Heart left ventricle (tissue), 16 donors: ENCODE measurements at regions of chr12 and their contacts with region 1.

Region 1: GRCh38 chr12:70733385-70733784 is 96.2 kb upstream of the PTPRB start:
- DNase-seq: peak in 1 of 5 donors; percentile 14
- ATAC-seq: peak in 3 of 4 donors; percentile 50 to 72 (median 70)
- H3K4me3 ChIP-seq: no peak overlapping the region
- H3K27ac ChIP-seq: no peak overlapping the region
- H3K4me1 ChIP-seq: no peaks in the 10 kb centered on the region
- H3K27me3 ChIP-seq: peaks cover 0 to 2% (median 0%) of the 10 kb centered on the region in 9 donors
- CTCF ChIP-seq: peak; percentile 55 to 79 (median 66)
- POLR2A ChIP-seq: no peak

Region 2: DNA sequence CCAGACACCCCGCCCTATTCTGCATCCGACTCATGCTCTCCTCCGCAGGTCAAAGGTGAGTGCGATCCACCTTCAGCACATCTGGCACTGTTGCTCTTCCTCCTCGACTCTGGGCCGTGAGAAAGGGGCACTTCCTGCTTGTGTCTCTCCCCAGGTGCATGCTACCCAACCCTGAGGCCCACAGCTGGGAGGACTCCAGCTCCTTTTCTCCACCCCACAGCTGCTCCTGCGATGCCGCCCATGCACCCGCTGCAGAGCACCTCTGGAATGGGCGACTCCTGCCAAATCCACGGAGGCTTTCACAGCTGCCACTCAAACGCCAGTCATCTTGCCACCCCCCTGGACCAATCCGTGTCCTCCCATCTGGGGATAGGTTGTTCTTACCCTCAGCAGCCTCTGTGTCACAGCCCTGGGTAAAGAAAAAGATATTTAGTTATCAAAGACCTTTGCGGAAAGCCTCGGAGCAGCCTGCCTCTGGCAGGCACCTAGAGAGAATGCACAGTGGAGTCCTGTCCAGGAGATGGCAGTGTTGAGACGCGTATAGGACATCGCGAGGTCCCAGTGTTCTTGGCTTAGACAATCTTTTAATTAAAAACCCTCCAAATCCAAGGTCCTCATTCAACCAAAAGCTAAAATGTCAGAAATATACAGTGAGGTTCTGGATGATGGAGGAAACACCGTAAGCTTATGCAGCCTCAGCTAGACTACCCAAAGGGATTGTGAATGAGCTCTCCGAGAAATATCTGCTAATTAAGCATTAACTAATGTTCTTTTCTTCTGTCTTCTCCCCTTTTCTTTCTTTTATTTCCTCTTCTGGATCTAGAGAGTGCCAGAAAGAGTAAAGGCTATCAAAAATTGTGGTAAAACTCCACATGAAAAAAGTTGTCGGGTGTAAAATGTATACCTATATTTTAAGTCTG is 854.1 kb before region 1 on chr12:
- intact Hi-C with region 1: loop called (anchors 2 to 10 kb)
- DNase-seq: peak in 4 of 5 donors; percentile 61 to 76 (median 68)
- ATAC-seq: peak; percentile 58 to 95 (median 94)
- H3K4me3 ChIP-seq: peak overlapping the region in 7 of 12 donors; percentile 19 to 37 (median 26)
- H3K27ac ChIP-seq: no peak overlapping the region
- H3K4me1 ChIP-seq: peaks cover 0 to 9% (median 0%) of the 10 kb centered on the region in 12 donors
- H3K27me3 ChIP-seq: no peaks in the 10 kb centered on the region
- CTCF ChIP-seq: peak; percentile 77 to 94 (median 88)
- POLR2A ChIP-seq: no peak

Region 3: DNA sequence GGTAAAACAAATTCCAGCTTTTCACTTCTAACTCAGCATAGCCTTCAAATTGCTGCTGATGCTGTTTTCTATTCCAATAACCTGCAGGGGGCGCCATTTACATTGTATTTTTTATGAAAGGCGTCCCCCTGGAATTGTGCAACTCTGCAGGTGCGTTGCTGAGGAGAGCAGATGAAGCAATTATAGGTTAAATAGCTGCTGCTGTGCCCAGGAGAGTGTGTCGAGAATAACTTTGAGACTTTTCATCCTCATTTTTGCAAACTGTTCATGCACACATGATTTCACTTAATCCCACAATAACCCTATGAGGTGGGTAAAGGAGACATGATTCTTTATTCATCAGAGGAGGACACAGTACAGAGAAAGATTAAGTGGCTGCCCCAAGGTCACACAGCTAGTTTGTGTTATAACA is 832.7 kb before region 1 on chr12:
- intact Hi-C with region 1: loop called in 6 of 10 experiments (anchors 5 to 10 kb)
- DNase-seq: peak in 4 of 5 donors; percentile 61 to 81 (median 68)
- ATAC-seq: peak in 3 of 4 donors; percentile 49 to 65 (median 58)
- H3K4me3 ChIP-seq: no peak overlapping the region
- H3K27ac ChIP-seq: peak overlapping the region in 2 of 12 donors; percentile 2 to 25
- H3K4me1 ChIP-seq: peaks cover 0 to 32% (median 9%) of the 10 kb centered on the region in 12 donors
- H3K27me3 ChIP-seq: no peaks in the 10 kb centered on the region
- CTCF ChIP-seq: peak; percentile 78 to 93 (median 86)
- POLR2A ChIP-seq: no peak

Region 4: DNA sequence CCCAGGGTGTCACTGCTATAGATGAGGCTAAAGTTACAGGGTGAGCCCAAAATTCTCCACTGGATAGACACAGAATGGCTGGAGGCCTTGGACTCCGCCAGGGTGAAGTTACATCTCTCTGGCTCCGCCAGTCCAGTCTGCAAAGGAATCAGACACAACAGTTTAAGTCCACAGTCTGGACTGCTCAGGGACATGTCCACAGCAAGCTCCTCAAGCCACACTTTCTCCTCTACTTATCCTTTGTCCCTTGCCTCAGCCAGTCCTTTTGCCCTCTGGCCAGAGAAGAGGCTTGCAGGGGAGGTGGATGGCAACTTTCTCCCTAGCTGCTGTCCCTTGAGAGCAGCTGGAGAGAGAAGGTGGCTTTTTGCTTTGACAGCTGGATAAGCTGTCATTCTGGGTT is 124.2 kb before region 1 on chr12:
- intact Hi-C with region 1: no loop called
- DNase-seq: no peak
- ATAC-seq: peak in 1 of 4 donors; percentile 13
- H3K4me3 ChIP-seq: peak overlapping the region; percentile 24 to 73 (median 60)
- H3K27ac ChIP-seq: peak overlapping the region; percentile 68 to 90 (median 78)
- H3K4me1 ChIP-seq: peaks cover 0 to 35% (median 9%) of the 10 kb centered on the region in 12 donors
- H3K27me3 ChIP-seq: peaks cover 0 to 21% (median 0%) of the 10 kb centered on the region in 9 donors
- CTCF ChIP-seq: no peak
- POLR2A ChIP-seq: no peak

Region 5: DNA sequence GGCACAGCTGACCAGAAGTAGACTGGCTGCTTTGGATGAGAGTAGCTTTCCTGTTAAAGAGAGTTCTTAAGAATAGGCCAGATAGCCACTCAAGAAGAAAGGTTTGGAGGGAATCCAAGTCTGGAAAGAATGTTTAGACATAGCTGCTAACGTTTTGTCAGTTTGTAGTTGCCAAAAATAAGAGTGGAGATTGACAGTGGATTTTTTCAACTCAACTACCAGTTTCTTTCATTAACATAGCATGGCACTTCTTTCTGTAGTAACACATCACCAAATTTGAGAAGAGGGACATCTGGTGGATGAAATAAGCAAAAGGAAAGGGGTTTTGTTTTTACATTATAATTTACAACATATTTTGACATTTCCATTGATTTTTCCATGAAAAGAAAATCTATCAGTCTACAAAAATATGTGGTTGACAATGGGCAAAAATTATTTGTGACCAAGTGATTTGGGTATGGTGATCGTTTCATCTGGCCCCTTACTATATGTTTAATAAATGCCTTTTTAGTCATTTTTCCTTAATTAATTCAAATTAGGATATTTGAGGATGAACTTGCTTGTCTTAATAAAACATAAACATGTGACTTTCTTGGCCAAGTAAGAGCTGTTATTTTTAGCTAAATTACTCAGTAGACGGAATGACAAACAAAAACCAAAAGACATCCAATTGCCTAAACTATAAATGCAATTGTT is 116.0 kb after region 1 on chr12:
- intact Hi-C with region 1: loop called in 9 of 10 experiments (anchors 1 to 10 kb)
- DNase-seq: no peak
- ATAC-seq: peak in 1 of 4 donors; percentile 76
- H3K4me3 ChIP-seq: no peak overlapping the region
- H3K27ac ChIP-seq: no peak overlapping the region
- H3K4me1 ChIP-seq: peaks cover 0 to 6% (median 0%) of the 10 kb centered on the region in 12 donors
- H3K27me3 ChIP-seq: no peaks in the 10 kb centered on the region
- CTCF ChIP-seq: peak; percentile 6 to 59 (median 41)
- POLR2A ChIP-seq: no peak

Region 6: DNA sequence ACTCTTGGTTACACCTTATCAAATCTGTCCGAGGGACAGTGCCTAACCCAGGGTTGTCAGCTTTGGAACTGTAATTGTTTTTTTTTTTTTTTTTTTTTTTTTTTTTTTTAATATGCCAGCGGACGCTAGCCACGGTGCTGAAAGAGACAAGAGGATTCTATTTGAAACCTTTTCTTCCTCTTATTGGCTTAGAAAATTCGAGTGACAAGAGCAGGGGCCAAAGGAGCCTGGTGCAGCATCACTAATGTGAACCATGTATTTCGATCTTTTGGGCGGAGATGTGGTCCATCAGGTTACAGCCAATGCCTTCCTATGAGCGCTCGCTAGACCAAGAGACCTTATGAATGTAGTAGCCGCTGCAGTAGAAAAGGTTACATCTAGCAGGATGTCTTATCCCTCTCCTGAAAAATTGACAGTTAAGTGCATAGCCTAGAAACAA is 186.2 kb after region 1 on chr12:
- intact Hi-C with region 1: no loop called
- DNase-seq: no peak
- ATAC-seq: no peak
- H3K4me3 ChIP-seq: no peak overlapping the region
- H3K27ac ChIP-seq: no peak overlapping the region
- H3K4me1 ChIP-seq: no peaks in the 10 kb centered on the region
- H3K27me3 ChIP-seq: peaks cover 0 to 33% (median 4%) of the 10 kb centered on the region in 9 donors
- CTCF ChIP-seq: no peak
- POLR2A ChIP-seq: no peak

Region 7: DNA sequence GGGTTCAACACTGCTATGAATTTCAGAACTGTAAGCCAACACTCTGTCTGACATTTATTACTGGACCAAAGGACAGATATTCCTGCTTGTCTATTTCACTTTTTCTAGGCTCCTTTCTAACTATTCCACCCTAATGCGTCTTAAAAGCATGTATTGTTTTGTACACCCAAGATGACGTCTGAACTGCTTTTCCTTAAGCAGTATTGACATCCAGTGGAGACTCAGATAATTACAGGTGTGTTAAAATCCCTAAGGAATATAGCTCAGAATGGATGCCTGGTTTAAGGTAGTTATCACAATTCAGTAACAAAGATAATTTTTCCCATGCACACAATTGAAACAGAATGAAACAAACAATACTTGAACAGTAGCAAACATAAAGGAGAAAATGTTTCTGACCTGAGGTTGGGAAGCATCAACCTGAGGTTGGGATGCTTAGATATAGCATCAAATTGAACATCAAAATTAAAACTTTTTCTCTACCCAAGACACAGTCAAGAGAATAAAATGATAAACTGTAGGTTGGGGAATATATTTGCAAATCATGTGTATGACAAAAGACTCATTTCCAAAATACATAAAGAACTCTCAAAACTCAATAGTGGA is 280.9 kb after region 1 on chr12:
- intact Hi-C with region 1: loop called in 7 of 10 experiments (anchors 5 to 10 kb)
- DNase-seq: no peak
- ATAC-seq: peak in 2 of 4 donors; percentile 41 to 42
- H3K4me3 ChIP-seq: no peak overlapping the region
- H3K27ac ChIP-seq: no peak overlapping the region
- H3K4me1 ChIP-seq: no peaks in the 10 kb centered on the region
- H3K27me3 ChIP-seq: no peaks in the 10 kb centered on the region
- CTCF ChIP-seq: peak in 9 of 12 donors; percentile 8 to 49 (median 35)
- POLR2A ChIP-seq: no peak

Region 8: GRCh38 chr12:71392521-71393145 is 659.2 kb after region 1 on chr12:
- intact Hi-C with region 1: loop called in 2 of 10 experiments (anchors 5 to 10 kb)
- DNase-seq: no peak
- ATAC-seq: peak in 3 of 4 donors; percentile 52 to 74 (median 62)
- H3K4me3 ChIP-seq: no peak overlapping the region
- H3K27ac ChIP-seq: no peak overlapping the region
- H3K4me1 ChIP-seq: peaks cover 0 to 3% (median 0%) of the 10 kb centered on the region in 12 donors
- H3K27me3 ChIP-seq: no peaks in the 10 kb centered on the region
- CTCF ChIP-seq: peak; percentile 64 to 84 (median 74)
- POLR2A ChIP-seq: no peak